Stomach (tissue), 19 donors: ENCODE measurements at regions of chr12 and their contacts with region 1.

Region 1: GRCh38 chr12:1583421-1584078 is 10.8 kb downstream of the FBXL14 start:
- DNase-seq: peak; percentile 68 to 94
- H3K4me3 ChIP-seq: peak overlapping the region in 2 of 4 donors; percentile 8 to 17
- H3K27ac ChIP-seq: no peak overlapping the region
- H3K4me1 ChIP-seq: peaks cover 10 to 49% (median 25%) of the 10 kb centered on the region in 4 donors
- H3K27me3 ChIP-seq: no peaks in the 10 kb centered on the region
- CTCF ChIP-seq: peak in 5 of 7 experiments; percentile 62 to 85 (median 81)
- EP300 ChIP-seq: no peak
- POLR2A ChIP-seq: no peak

Region 2: GRCh38 chr12:1117970-1118563 is 465.5 kb before region 1 on chr12:
- intact Hi-C with region 1: loop called (anchors 5 kb)
- DNase-seq: peak; percentile 87 to 94
- H3K4me3 ChIP-seq: no peak overlapping the region
- H3K27ac ChIP-seq: no peak overlapping the region
- H3K4me1 ChIP-seq: peaks cover 0 to 14% (median 4%) of the 10 kb centered on the region in 4 donors
- H3K27me3 ChIP-seq: no peaks in the 10 kb centered on the region
- CTCF ChIP-seq: peak in 6 of 7 experiments; percentile 49 to 95 (median 93)
- EP300 ChIP-seq: no peak
- POLR2A ChIP-seq: no peak

Region 3: DNA sequence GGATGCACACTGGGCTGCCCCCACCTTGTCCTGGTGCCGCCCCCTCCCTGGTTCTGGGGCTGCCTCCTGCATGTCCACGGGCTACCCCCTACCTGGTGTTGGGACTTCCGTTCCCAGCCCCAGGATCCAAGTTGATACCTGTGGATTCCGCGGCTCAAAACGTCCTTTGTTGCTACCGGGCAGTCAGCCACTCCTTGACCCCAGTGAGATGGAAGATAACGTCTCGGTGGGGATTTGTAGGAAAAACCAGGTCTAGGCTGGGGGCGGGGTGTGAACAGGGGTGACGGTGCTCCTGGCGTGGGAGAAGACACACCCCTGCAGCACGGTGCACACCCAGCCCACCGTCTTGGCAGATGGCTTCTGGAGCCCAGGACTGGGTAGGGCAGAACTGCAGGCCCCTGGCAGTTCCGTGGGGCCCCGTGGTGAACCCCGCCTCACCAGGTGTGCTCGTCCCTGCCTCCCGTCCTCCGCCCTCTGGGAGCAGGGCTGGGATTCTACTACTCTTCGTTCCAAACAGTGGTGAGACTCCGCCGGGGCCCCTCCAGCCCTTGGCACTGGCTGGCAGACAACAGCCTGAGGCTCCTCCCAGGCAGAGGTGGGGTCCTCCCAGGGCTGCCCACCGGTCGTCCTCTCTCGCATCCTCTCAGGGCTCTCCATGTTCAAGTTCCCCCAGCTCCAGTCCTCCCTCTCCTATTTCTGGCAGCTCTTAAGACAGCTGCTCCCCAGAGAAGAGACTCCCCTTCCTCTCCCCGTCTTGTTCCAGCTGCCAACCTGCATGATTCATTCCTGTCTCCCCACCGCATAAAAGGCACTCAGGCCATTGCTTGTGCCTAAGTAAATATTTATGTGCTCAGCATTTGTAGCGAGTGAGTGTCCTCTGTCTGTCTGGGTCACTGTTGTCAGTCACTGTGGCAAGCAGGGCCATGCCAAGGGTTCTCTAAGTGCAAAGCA is 64.7 kb before region 1 on chr12:
- intact Hi-C with region 1: no loop called
- DNase-seq: peak in 1 of 2 donors; percentile 42
- H3K4me3 ChIP-seq: peak overlapping the region in 1 of 4 donors; percentile 24
- H3K27ac ChIP-seq: no peak overlapping the region
- H3K4me1 ChIP-seq: peaks cover 5 to 15% (median 13%) of the 10 kb centered on the region in 4 donors
- H3K27me3 ChIP-seq: peaks cover 0 to 38% (median 5%) of the 10 kb centered on the region in 3 donors
- CTCF ChIP-seq: no peak
- EP300 ChIP-seq: no peak
- POLR2A ChIP-seq: no peak

Region 4: DNA sequence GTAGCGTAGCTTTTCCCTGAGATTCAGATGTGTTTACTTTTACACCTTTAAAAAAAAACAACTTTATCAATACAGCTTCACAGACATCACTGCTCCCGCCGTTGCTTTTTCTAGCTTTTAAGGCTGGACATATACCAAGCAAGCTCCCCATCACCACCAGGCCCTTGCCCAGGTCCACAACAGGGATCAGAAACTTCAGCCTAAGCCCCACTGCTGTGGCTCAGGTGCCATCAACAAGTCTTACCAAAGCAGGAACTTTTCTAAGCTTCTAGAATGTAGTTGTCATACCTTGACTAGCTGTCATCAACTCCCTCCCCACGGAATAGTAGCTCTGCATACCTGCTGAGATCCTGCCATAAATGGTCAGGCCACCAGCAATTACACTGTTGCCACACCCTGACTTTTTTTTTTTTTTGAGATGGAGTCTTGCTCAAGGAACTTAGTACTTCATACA is 87.3 kb after region 1 on chr12:
- intact Hi-C with region 1: no loop called
- DNase-seq: peak in 1 of 2 donors; percentile 79
- H3K4me3 ChIP-seq: no peak overlapping the region
- H3K27ac ChIP-seq: peak overlapping the region; percentile 72 to 86 (median 77)
- H3K4me1 ChIP-seq: peaks cover 16 to 40% (median 31%) of the 10 kb centered on the region in 4 donors
- H3K27me3 ChIP-seq: no peaks in the 10 kb centered on the region
- CTCF ChIP-seq: no peak
- EP300 ChIP-seq: no peak
- POLR2A ChIP-seq: no peak